RWPE1 (cell line): ENCODE measurements at regions of chr2 and their contacts with region 1.

Region 1: DNA sequence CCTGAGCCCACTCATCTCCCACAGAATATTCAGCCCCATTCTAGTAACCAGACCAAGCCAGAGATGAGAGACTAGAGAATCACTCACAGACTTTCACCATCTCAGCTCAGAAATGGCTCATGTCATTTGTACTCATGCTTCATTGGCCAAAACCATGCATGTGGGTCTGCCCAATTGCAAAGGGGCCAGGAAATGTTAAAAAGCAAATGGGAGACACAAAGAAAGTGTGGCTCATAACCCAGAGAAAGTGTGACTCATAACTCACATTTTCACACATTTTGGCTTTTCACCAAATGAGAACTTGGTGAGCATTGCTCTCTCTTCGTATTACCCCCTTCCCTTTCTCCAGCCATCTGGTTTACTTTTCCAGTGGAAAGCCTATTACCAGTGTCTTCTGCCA is 66.2 kb downstream of the MDH1 start:
- DNase-seq: no peak
- H3K27ac ChIP-seq: no peak overlapping the region
- CTCF ChIP-seq: no peak

Region 2: GRCh38 chr2:62089658-62090057 is 1565.3 kb before region 1 on chr2:
- CTCF ChIA-PET with region 1: interaction called, 11 read pairs
- POLR2A ChIA-PET with region 1: no interaction called
- DNase-seq: no peak
- H3K27ac ChIP-seq: no peak overlapping the region
- CTCF ChIP-seq: no peak

Region 3: GRCh38 chr2:63772061-63772460 is 117.1 kb after region 1 on chr2:
- CTCF ChIA-PET with region 1: no interaction called
- POLR2A ChIA-PET with region 1: no interaction called
- DNase-seq: no peak
- H3K27ac ChIP-seq: no peak overlapping the region
- CTCF ChIP-seq: no peak